ENCODE measurements at regions of chr2 and their contacts with region 1.

Region 1: GRCh38 chr2:68734688-68735525 is at the start of gene ARHGAP25:
- DNase-seq: peak; percentile 83
- ATAC-seq: peak; percentile 78
- H3K4me3 ChIP-seq: peak within 1 kb of the TSS; percentile 47 to 92 (median 64)
- H3K4me3 Mint-ChIP-seq: no peak within 1 kb of the TSS
- H3K27ac ChIP-seq: peak within 1 kb of the TSS; percentile 93
- H3K27ac Mint-ChIP-seq: no peak within 1 kb of the TSS
- H3K4me1 ChIP-seq: peaks cover 66 to 77% of the 10 kb centered on the region in 2 donors
- H3K4me1 Mint-ChIP-seq: peaks cover 55% of the 10 kb centered on the region
- H3K27me3 ChIP-seq: no peaks in the 10 kb centered on the region
- H3K27me3 Mint-ChIP-seq: no peaks in the 10 kb centered on the region
- CTCF ChIP-seq: no peak
- total RNA-seq, gene ARHGAP25: 207 and 221 TPM in 2 replicates

Region 2: DNA sequence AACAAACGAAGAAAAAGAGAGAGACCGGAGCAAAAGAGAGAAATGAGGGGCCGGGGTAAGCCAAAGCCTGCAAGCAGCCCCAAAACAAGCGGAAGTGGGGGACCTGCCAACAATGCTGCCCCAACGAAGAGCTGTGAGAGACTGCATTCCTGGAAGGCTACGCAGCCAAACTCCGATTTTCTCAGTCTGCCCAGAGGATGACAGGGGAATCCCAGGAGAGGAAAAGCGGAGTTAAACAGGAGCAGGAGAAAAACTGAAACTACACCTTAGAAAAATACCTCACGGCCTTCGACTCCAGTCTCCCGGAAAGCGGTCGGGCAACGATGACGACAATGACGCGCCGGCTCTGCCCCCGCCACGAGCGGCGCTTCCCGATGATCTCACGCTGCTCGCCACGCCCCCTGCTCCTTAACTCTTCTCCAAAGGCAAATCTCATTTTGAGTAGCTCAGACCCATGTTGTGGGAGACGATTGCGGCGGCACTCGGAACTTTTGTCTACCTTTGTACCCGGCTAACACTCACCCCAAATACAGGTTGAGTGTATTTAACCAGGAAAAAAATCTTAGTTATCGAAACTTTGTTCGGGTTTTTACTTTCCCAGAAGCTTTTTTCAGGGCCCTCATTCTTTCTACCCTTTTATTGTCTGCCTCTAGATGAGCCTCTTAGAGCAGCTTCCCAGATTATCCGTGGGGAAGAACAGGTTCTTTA is 672.1 kb before region 1 on chr2 and contains the start of gene C1D:
- CTCF ChIA-PET with region 1: no interaction called
- POLR2A ChIA-PET with region 1: no interaction called
- intact Hi-C with region 1: no loop called
- DNase-seq: peak; percentile 95
- ATAC-seq: peak; percentile 96
- H3K4me3 ChIP-seq: peak within 1 kb of the TSS; percentile 87 to 97 (median 96)
- H3K4me3 Mint-ChIP-seq: peak within 1 kb of the TSS; percentile 95
- H3K27ac ChIP-seq: peak within 1 kb of the TSS; percentile 88 to 96
- H3K27ac Mint-ChIP-seq: peak within 1 kb of the TSS; percentile 96
- H3K4me1 ChIP-seq: peaks cover 20 to 30% of the 10 kb centered on the region in 2 donors
- H3K4me1 Mint-ChIP-seq: peaks cover 40% of the 10 kb centered on the region
- H3K27me3 ChIP-seq: no peaks in the 10 kb centered on the region
- H3K27me3 Mint-ChIP-seq: peaks cover 6% of the 10 kb centered on the region
- CTCF ChIP-seq: no peak
- total RNA-seq, gene C1D: 20.1 and 24.8 TPM in 2 replicates

Region 3: DNA sequence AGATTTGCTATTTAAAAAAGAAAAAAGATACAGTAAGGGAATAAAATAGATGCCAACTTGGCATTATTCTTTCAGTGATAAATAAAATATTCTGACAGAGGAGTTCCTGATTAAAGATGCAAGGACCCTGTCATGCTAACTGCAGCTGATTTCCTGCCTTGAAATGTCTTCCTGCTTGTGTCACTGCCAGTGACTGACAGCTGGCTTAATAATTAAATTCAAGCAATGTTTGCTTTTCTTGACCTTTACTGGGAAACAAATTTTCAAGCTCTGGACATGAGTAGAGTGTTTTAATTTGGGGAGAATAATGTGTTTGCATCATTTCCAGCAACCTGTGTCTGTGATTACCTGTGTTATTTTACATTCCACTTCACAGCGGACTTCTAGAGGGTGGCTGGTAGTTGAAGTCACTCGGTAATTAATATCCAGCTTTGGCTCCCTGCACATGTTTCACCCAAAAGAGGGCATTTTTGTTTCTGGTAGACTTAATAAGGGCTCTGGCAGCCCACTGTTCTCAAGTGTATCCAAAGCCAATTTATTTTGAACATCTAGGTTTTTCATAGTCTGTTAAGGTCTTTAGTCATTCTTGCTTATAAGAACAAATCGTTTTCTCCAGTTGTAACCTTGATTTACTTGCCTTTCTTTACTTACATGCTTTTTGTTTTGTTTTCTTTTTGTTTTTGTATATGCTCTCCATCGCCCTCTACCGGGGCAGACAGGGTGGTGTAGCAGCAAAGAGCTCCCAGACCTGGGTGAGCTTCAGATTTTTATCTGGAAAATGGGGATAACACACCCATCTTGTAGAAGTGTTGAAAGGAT is 140.0 kb before region 1 on chr2:
- CTCF ChIA-PET with region 1: no interaction called
- POLR2A ChIA-PET with region 1: no interaction called
- intact Hi-C with region 1: no loop called
- DNase-seq: peak; percentile 64
- ATAC-seq: no peak
- H3K4me3 ChIP-seq: no peak overlapping the region
- H3K4me3 Mint-ChIP-seq: peak overlapping the region; percentile 9
- H3K27ac ChIP-seq: no peak overlapping the region
- H3K27ac Mint-ChIP-seq: no peak overlapping the region
- H3K4me1 ChIP-seq: peaks cover 5 to 9% of the 10 kb centered on the region in 2 donors
- H3K4me1 Mint-ChIP-seq: peaks cover 14% of the 10 kb centered on the region
- H3K27me3 ChIP-seq: no peaks in the 10 kb centered on the region
- H3K27me3 Mint-ChIP-seq: no peaks in the 10 kb centered on the region
- CTCF ChIP-seq: peak; percentile 96

Region 4: DNA sequence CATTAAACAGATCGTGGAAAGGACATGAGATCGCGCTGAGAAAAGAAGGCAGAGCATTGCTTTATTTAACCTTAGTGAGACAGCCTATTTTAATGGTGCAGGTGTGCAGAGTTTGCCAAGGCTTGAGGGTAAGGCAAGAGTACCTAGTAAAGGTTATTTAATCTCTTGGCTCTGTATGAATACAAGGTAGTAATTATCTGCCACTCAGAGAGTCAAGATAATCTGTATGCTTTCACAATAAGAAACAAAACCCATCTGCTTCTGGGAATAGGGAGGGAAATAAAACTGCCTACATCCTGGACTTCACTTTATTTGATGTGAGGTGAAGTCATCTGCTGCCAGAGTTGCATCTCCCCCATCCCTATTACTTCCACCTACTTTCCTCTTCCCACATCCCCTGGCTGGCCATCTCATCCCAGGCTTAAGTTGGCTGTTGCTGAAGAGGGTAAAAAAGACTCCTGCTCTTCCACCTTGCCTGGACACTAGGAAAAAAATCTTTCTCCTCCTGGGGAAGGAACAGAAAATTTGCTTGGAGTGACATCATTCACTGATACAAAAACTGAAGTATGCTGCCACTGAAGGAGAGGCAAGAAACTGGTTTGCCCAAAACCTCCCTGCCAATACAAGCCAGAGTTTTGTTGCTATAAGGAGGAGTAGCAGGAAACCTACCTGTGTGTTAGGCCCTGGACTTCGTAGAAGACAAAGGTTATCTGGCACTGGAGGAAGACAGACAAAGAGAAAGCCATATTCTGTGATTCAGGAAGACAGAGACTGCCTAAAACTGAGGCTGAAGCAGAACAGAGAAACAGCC is 36.1 kb before region 1 on chr2:
- CTCF ChIA-PET with region 1: no interaction called
- POLR2A ChIA-PET with region 1: no interaction called
- intact Hi-C with region 1: no loop called
- DNase-seq: no peak
- ATAC-seq: no peak
- H3K4me3 ChIP-seq: no peak overlapping the region
- H3K4me3 Mint-ChIP-seq: no peak overlapping the region
- H3K27ac ChIP-seq: no peak overlapping the region
- H3K27ac Mint-ChIP-seq: no peak overlapping the region
- H3K4me1 ChIP-seq: no peaks in the 10 kb centered on the region
- H3K4me1 Mint-ChIP-seq: no peaks in the 10 kb centered on the region
- H3K27me3 ChIP-seq: no peaks in the 10 kb centered on the region
- H3K27me3 Mint-ChIP-seq: no peaks in the 10 kb centered on the region
- CTCF ChIP-seq: no peak

Region 5: DNA sequence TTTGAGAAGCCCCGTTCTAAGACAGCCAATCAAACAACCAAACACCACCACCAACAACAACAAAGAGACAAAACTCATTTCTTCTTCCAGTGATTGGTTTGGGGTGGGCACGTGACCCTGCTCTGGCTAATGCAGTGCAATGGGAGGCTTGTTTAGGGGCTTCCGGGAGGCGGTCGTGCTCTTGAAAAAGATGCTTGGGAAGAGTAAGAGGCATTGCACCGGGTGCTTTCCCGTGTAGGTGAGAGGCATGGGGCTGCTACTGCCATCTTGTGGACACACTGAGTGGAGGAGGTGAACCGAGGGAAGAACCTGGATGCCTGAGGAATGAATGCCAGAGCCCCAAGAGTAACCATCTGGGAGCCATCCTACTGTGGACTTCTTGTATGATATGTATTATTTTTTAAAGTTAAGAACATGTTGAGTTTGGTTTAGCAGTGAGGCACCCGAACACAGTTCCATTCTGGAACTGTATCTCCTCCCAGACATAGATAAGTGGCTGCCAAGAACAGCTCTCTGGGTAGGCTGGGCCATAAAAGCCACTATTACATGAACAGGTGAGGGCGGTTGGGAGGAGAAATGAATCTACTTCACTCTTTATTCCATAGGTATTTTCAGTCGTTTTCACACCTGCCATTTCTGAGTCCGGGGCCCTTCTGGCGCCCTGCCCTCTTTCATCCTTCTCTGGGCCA is 19.4 kb before region 1 on chr2:
- CTCF ChIA-PET with region 1: interaction called, 280 read pairs
- POLR2A ChIA-PET with region 1: interaction called, 3 read pairs
- intact Hi-C with region 1: loop called (anchors 2 kb)
- DNase-seq: peak; percentile 70
- ATAC-seq: peak; percentile 37
- H3K4me3 ChIP-seq: peak overlapping the region in 1 of 5 experiments; percentile 17
- H3K4me3 Mint-ChIP-seq: peak overlapping the region; percentile 33
- H3K27ac ChIP-seq: peak overlapping the region; percentile 59 to 78
- H3K27ac Mint-ChIP-seq: peak overlapping the region; percentile 83
- H3K4me1 ChIP-seq: peaks cover 45 to 50% of the 10 kb centered on the region in 2 donors
- H3K4me1 Mint-ChIP-seq: peaks cover 69% of the 10 kb centered on the region
- H3K27me3 ChIP-seq: no peaks in the 10 kb centered on the region
- H3K27me3 Mint-ChIP-seq: no peaks in the 10 kb centered on the region
- CTCF ChIP-seq: peak; percentile 57

Region 6: GRCh38 chr2:68721482-68722101 is 13.3 kb before region 1 on chr2:
- CTCF ChIA-PET with region 1: interaction called, 280 read pairs
- POLR2A ChIA-PET with region 1: interaction called, 7 read pairs
- intact Hi-C with region 1: loop called (anchors 2 kb)
- DNase-seq: peak; percentile 85
- ATAC-seq: peak; percentile 88
- H3K4me3 ChIP-seq: peak overlapping the region in 3 of 5 experiments; percentile 1 to 14 (median 3)
- H3K4me3 Mint-ChIP-seq: peak overlapping the region; percentile 82
- H3K27ac ChIP-seq: peak overlapping the region; percentile 66 to 81
- H3K27ac Mint-ChIP-seq: peak overlapping the region; percentile 89
- H3K4me1 ChIP-seq: peaks cover 41 to 56% of the 10 kb centered on the region in 2 donors
- H3K4me1 Mint-ChIP-seq: peaks cover 65% of the 10 kb centered on the region
- H3K27me3 ChIP-seq: no peaks in the 10 kb centered on the region
- H3K27me3 Mint-ChIP-seq: no peaks in the 10 kb centered on the region
- CTCF ChIP-seq: no peak

Region 7: DNA sequence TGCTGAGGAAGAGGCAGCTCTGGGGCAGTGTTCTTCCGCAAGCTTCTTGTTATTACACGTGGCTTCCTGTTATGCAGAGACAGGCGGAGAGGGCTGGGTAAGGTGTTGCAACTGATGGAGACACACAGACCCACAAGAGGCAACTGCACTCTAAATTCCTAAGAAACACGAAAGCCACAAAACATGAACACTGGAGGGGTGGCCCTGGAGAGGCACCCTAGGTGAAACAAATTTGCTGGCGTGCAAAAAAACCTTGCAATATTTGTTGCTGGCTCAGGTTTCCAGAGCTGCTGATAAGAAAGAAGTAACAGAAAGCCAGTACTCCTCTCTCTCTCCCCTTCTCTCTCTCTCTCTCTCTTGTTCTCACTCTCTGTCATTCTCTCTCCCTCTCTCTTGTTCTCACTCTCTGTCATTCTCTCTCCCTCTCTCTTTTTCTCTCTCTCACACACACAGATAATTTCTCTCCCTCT is 31.5 kb after region 1 on chr2:
- CTCF ChIA-PET with region 1: interaction called, 10 read pairs
- POLR2A ChIA-PET with region 1: interaction called, 4 read pairs
- intact Hi-C with region 1: no loop called
- DNase-seq: peak; percentile 74
- ATAC-seq: peak; percentile 44
- H3K4me3 ChIP-seq: peak overlapping the region in 3 of 5 experiments; percentile 9 to 48 (median 16)
- H3K4me3 Mint-ChIP-seq: peak overlapping the region; percentile 80
- H3K27ac ChIP-seq: peak overlapping the region; percentile 93 to 99
- H3K27ac Mint-ChIP-seq: peak overlapping the region; percentile 98
- H3K4me1 ChIP-seq: peaks cover 97 to 100% of the 10 kb centered on the region in 2 donors
- H3K4me1 Mint-ChIP-seq: peaks cover 94% of the 10 kb centered on the region
- H3K27me3 ChIP-seq: no peaks in the 10 kb centered on the region
- H3K27me3 Mint-ChIP-seq: no peaks in the 10 kb centered on the region
- CTCF ChIP-seq: no peak

Region 8: DNA sequence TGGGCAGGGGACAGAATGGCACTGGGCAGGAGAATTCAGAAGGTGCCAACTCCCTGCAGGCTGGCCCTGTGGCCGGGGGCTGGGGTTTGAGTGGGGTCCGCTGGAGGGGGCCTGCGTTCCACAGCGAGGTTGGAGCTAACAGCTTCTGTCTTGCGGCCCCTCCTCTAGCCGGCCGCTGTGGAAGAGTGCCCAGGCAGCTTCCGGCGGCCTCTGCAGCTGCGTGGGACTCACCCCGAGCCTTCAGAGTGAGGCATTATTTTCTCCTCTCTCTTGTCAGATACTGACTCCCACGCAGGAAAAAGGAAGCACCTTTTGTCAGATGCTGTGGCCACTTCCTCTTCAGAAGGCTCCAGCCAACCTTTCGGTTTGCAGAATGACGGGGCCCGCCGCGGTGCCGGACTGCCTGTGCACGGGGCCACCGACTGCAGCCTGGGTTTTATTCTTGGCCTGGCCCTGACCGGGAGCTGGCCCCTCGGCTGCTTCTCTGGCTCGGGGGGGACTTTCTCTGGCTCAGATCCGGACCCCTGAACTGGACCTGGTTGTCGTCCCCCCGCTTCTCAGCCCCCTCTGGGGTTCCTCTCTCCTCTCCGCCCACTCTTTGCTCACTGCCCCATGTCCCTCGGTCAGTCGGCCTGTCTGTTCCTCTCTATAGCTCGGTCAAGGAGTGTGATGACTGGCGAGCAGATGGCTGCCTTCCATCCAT is 39.8 kb after region 1 on chr2:
- CTCF ChIA-PET with region 1: interaction called, 8 read pairs
- POLR2A ChIA-PET with region 1: interaction called, 4 read pairs
- intact Hi-C with region 1: loop called (anchors 2 kb)
- DNase-seq: peak; percentile 91
- ATAC-seq: peak; percentile 80
- H3K4me3 ChIP-seq: peak overlapping the region; percentile 79 to 96 (median 91)
- H3K4me3 Mint-ChIP-seq: peak overlapping the region; percentile 99
- H3K27ac ChIP-seq: peak overlapping the region; percentile 93 to 99
- H3K27ac Mint-ChIP-seq: peak overlapping the region; percentile 98
- H3K4me1 ChIP-seq: peaks cover 83 to 88% of the 10 kb centered on the region in 2 donors
- H3K4me1 Mint-ChIP-seq: peaks cover 80% of the 10 kb centered on the region
- H3K27me3 ChIP-seq: no peaks in the 10 kb centered on the region
- H3K27me3 Mint-ChIP-seq: no peaks in the 10 kb centered on the region
- CTCF ChIP-seq: no peak

Measured in B cell (primary cell).